Astrocyte of the cerebellum (primary cell): ENCODE measurements at regions of chr1 and their contacts with region 1.

Region 1: DNA sequence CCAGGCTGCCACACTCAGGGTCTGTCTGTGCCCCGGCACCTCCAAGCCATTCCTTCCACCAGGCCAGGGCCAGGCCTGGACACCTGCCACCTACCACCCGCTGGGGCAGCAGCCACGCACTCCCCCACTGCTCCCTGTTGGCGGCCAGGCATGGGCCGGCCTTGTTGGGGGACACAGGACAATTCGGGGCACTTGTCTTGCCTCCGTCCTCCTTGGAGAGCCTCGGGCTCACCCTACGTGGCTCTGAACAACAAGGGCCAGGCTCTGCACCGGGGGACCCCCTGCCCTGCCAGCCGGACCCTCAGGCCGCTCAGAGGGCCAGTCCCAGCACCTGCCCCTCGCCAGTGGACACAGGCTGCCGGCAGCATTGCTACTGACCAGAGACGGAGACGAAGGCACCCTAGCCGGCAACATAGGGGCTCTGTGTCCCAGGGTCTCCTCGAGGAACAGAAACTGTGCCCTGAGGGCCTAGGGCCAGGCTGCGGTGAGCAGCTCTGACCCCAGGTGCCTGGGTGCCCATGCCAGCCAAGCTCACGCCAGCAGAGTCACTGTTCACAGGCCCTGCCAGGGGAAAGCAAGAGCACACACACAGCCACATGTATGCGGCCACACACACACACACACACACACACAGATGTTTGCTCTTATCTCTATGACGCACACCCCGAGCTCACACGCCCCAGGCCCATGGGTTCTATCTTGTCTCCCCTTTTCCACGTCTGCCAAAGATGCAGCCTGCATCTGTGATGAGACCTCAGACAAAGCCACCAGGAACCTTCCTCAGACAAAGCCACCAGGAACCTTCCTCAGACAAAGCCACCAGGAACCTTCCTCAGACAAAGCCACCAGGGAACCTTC is 45.9 kb downstream of the MORN1 start:
- DNase-seq: no peak
- H3K4me3 ChIP-seq: no peak overlapping the region
- CTCF ChIP-seq: no peak

Region 2: DNA sequence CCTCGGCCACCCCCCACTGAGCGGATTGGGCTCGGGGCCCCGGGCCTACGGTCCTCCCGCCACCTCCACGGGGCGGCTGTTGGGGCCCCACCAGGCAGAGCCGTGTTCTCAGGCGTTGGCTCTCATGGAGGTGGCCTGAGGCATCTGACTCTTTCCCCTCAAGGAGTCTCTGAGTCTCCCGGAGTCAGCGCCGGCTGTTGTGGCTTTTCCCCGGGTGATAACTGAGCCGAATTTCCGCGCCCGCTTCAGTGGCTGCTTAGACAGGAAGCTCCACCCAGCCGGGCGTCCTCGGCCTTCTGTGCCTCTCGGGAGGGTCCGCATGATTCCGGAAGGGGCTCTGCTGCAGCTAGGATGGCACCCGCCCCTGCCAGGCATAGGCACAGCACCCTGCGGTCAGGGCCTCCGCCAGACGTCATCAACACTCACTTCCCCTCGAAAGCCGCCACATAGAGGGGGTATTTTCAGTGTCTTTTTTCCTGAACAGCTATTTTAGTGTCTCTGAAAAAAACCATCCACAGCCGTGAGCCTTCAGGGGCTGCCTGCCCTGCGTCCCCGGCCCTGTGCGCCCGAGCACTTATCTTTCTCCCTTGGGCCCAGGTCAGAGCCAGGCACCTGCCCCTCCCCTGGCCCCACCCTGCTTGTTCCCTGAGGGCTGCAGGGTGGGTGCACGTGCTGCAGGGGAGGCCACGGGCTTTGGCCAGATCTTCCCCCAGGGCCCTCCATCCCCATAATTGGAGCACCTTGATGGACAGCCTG is 44.4 kb before region 1 on chr1:
- in situ Hi-C with region 1: loop called (anchors 5 kb)
- DNase-seq: no peak
- H3K4me3 ChIP-seq: no peak overlapping the region
- CTCF ChIP-seq: no peak